ENCODE measurements at regions of chr11 and their contacts with region 1.

Region 1: GRCh38 chr11:36421546-36422155 is 88.4 kb downstream of the TRAF6 start:
- DNase-seq: no peak
- H3K4me3 Mint-ChIP-seq: no peak overlapping the region
- H3K27ac Mint-ChIP-seq: peak overlapping the region; percentile 67
- H3K4me1 Mint-ChIP-seq: peaks cover 14% of the 10 kb centered on the region
- H3K27me3 Mint-ChIP-seq: peaks cover 28% of the 10 kb centered on the region

Region 2: GRCh38 chr11:36312611-36313472 is 108.8 kb before region 1 on chr11:
- CTCF ChIA-PET with region 1: no interaction called
- intact Hi-C with region 1: loop called (anchors 1 kb)
- DNase-seq: no peak
- H3K4me3 Mint-ChIP-seq: no peak overlapping the region
- H3K27ac Mint-ChIP-seq: no peak overlapping the region
- H3K4me1 Mint-ChIP-seq: peaks cover 11% of the 10 kb centered on the region
- H3K27me3 Mint-ChIP-seq: peaks cover 27% of the 10 kb centered on the region

Region 3: GRCh38 chr11:36354221-36355003 is 67.2 kb before region 1 on chr11:
- CTCF ChIA-PET with region 1: interaction called, 6 read pairs
- intact Hi-C with region 1: loop called (anchors 2 kb)
- DNase-seq: no peak
- H3K4me3 Mint-ChIP-seq: no peak overlapping the region
- H3K27ac Mint-ChIP-seq: peak overlapping the region; percentile 16
- H3K4me1 Mint-ChIP-seq: peaks cover 49% of the 10 kb centered on the region
- H3K27me3 Mint-ChIP-seq: peaks cover 18% of the 10 kb centered on the region

Region 4: GRCh38 chr11:36390963-36391471 is 30.6 kb before region 1 on chr11:
- CTCF ChIA-PET with region 1: no interaction called
- intact Hi-C with region 1: loop called (anchors 1 kb)
- DNase-seq: peak; percentile 21
- H3K4me3 Mint-ChIP-seq: no peak overlapping the region
- H3K27ac Mint-ChIP-seq: peak overlapping the region; percentile 72
- H3K4me1 Mint-ChIP-seq: peaks cover 47% of the 10 kb centered on the region
- H3K27me3 Mint-ChIP-seq: peaks cover 6% of the 10 kb centered on the region

Region 5: DNA sequence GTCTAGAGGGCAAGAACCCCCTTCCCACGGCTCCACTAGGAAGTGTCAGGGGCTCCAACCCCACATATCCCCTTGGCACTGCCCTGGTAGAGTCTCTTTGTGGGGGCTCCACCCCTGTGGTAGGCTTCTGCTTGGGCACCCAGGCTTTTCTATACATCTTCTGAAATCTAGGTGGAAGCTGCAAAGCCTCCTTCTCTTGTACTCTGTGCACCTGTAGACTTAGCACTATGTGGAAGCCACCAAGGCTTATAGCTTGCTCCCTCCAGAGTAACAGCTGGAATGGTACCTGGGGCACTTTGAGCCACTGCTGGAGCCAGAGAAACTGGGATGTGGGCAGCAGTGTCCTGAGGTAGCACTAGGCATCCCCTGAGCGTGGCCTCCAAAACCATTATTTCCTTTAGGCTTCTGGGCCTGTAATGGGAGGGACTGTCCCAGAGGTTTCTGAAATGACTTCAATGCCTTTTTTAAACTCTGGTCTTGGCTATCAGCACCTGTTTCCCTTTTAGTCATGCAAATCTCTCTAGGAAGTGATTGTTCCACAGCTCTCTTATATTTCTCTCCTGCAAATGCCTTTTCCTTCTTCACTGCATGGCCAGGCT is 20.1 kb after region 1 on chr11:
- CTCF ChIA-PET with region 1: interaction called, 4 read pairs
- intact Hi-C with region 1: loop called (anchors 2 kb)
- DNase-seq: peak; percentile 53
- H3K4me3 Mint-ChIP-seq: no peak overlapping the region
- H3K27ac Mint-ChIP-seq: no peak overlapping the region
- H3K4me1 Mint-ChIP-seq: peaks cover 12% of the 10 kb centered on the region
- H3K27me3 Mint-ChIP-seq: no peaks in the 10 kb centered on the region

Measured in activated naive CD4-positive, alpha-beta T cell treated with anti-CD3 and anti-CD28 coated beads for 36 hours (primary cell).